ENCODE measurements at regions of chr19 and their contacts with region 1.

Region 1: GRCh38 chr19:49546825-49547565 is 19.2 kb downstream of the RCN3 start:
- DNase-seq: no peak
- H3K4me3 ChIP-seq: no peak overlapping the region
- CTCF ChIP-seq: peak; percentile 64

Region 2: GRCh38 chr19:49473868-49474544 is 73.0 kb before region 1 on chr19 and contains the start of gene FLT3LG:
- CTCF ChIA-PET with region 1: interaction called, 24 read pairs
- POLR2A ChIA-PET with region 1: no interaction called
- DNase-seq: no peak
- H3K4me3 ChIP-seq: peak within 1 kb of the TSS; percentile 75
- CTCF ChIP-seq: peak; percentile 99

Region 3: GRCh38 chr19:49497047-49497788 is 49.8 kb before region 1 on chr19:
- CTCF ChIA-PET with region 1: interaction called, 20 read pairs
- POLR2A ChIA-PET with region 1: no interaction called
- DNase-seq: no peak
- H3K4me3 ChIP-seq: peak overlapping the region; percentile 94
- CTCF ChIP-seq: no peak

Region 4: DNA sequence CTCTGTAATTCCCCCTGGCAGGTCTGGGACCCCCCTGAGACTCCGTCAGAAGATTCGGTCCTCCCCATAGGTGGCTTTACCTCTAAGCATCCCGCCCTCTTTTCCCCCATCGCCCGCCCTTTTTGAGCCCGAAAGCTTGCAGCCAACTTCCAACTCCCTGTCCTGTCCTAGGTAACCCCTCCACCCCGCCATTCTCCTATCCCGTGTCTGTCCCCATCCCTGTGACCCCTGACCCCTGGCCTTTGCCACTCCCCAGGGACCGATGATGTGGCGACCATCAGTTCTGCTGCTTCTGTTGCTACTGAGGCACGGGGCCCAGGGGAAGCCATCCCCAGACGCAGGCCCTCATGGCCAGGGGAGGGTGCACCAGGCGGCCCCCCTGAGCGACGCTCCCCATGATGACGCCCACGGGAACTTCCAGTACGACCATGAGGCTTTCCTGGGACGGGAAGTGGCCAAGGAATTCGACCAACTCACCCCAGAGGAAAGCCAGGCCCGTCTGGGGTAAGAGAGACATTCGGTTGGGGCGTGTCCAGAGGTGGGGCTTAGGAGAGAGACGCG is 18.7 kb before region 1 on chr19:
- CTCF ChIA-PET with region 1: interaction called, 30 read pairs
- POLR2A ChIA-PET with region 1: interaction called, 8 read pairs
- DNase-seq: no peak
- H3K4me3 ChIP-seq: peak overlapping the region; percentile 91
- CTCF ChIP-seq: no peak

Region 5: DNA sequence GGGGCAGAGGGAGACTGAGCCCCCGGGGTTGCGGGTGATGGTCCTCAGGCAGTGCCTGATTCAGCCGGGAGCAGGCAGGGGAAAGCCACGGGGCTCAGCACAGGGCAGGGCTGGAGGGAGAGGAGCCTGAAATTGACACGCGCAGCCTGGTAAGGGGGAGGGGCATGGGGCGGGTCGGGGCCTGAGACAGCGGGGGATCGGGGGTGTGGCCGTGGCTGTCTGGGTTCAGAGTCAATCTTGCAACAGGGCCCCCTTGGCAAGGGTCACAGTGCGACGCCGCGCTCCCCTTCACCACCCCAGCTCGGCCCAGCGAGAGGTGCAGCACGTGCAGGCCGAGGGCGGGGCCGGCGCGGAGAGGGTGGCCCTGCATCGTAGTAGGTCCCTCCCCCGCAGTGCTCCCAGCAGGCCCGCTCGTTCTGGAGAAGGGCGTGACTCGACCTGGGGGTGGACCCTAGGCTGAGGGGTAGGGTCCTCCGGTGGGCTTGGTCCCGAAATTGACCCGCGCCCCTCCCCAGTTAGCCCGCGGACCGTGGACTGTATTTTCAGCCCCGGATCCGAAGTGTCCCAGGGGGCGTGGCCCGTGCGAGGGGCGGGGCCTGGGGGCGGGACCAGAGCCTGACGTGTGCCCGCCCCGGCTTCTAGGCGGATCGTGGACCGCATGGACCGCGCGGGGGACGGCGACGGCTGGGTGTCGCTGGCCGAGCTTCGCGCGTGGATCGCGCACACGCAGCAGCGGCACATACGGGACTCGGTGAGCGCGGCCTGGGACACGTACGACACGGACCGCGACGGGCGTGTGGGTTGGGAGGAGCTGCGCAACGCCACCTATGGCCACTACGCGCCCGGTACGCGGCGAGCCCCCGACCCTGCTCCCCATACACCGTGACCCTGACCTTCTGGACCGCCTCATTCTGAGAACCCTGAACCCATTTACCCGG is 13.2 kb before region 1 on chr19:
- CTCF ChIA-PET with region 1: interaction called, 36 read pairs
- POLR2A ChIA-PET with region 1: no interaction called
- DNase-seq: no peak
- H3K4me3 ChIP-seq: peak overlapping the region; percentile 56
- CTCF ChIP-seq: no peak

Region 6: GRCh38 chr19:49580264-49581006 is 33.4 kb after region 1 on chr19 and contains the start of gene NOSIP:
- CTCF ChIA-PET with region 1: interaction called, 14 read pairs
- POLR2A ChIA-PET with region 1: interaction called, 3 read pairs
- DNase-seq: peak; percentile 84
- H3K4me3 ChIP-seq: peak within 1 kb of the TSS; percentile 84
- CTCF ChIP-seq: no peak

Measured in AG04449 (cell line).